Colonic mucosa (tissue), 4 donors: ENCODE measurements at regions of chr22 and their contacts with region 1.

Region 1: GRCh38 chr22:17171313-17172171 is 12.5 kb upstream of the HDHD5 start:
- DNase-seq: peak; percentile 91
- H3K4me3 ChIP-seq: peak overlapping the region; percentile 62
- H3K27ac ChIP-seq: peak overlapping the region; percentile 95
- H3K4me1 ChIP-seq: no peaks in the 10 kb centered on the region
- H3K27me3 ChIP-seq: no peaks in the 10 kb centered on the region
- CTCF ChIP-seq: peak; percentile 75

Region 2: DNA sequence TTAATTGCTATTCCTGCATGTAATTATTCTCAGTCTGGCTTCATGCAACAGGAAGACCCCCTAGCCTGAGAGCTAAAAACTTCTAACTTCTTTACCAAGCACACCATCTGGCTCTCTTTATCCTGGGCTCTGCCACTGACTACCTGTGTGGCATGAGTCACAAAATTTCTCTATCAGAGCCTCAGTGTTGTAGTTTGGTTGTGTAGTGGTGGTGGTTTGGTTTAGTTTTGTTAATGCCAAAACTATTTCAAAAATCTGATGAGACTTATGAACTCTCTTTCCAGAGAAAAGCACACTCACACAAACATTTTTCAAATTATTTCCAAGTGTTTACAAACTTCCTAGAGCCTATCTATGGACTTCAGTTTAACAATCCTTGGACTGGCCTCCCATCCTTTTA is 94.3 kb before region 1 on chr22:
- intact Hi-C with region 1: loop called (anchors 5 kb)
- DNase-seq: no peak
- H3K4me3 ChIP-seq: no peak overlapping the region
- H3K27ac ChIP-seq: no peak overlapping the region
- H3K4me1 ChIP-seq: no peaks in the 10 kb centered on the region
- H3K27me3 ChIP-seq: no peaks in the 10 kb centered on the region
- CTCF ChIP-seq: no peak